Cardiac septum (tissue), 1 donor: ENCODE measurements at regions of chr15 and their contacts with region 1.

Region 1: DNA sequence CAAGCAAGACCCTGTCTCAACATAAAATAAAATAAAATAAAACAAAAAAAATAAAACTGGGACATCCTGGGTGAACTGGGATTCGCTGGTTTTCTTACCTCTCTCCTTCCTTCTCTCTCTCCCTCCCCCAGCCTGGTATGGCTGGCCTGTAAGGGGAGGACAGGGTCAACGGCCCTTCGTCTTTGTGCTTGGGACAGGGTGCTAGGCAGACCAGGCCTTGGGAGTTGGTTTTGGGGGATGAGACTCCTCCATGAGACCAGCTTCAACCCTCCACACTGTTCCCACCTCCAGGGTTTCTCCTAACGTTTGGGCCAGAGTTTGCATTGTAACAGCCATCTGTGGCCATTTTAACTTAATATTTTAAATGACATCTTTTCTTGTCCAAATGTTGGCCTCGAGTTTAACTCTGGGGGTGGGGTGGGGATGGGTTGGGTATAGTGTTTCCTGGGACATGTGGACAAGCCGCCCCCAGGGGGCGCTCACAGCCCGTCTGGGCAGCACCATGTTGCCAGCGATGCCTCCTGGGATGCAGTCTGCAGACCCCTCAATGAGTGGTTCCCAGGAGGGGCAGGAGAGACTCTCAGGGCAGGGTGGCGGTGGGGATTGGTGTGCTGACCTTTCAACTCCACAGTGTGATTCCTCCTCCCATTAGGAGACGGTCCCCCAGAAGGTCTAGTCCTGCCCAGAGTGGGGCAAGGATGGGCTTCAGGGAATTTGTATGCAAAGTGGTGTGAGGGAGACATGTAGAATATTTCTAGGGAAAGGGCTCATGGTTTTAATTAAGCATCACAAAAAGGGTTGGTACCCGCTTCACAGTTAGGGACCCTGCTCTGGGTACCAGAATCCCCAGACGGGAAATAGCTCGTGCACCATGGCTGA is 37.7 kb upstream of the LCTL start:
- DNase-seq: peak; percentile 87

Region 2: GRCh38 chr15:66459818-66460615 is 143.5 kb before region 1 on chr15:
- intact Hi-C with region 1: no loop called
- DNase-seq: no peak

Region 3: DNA sequence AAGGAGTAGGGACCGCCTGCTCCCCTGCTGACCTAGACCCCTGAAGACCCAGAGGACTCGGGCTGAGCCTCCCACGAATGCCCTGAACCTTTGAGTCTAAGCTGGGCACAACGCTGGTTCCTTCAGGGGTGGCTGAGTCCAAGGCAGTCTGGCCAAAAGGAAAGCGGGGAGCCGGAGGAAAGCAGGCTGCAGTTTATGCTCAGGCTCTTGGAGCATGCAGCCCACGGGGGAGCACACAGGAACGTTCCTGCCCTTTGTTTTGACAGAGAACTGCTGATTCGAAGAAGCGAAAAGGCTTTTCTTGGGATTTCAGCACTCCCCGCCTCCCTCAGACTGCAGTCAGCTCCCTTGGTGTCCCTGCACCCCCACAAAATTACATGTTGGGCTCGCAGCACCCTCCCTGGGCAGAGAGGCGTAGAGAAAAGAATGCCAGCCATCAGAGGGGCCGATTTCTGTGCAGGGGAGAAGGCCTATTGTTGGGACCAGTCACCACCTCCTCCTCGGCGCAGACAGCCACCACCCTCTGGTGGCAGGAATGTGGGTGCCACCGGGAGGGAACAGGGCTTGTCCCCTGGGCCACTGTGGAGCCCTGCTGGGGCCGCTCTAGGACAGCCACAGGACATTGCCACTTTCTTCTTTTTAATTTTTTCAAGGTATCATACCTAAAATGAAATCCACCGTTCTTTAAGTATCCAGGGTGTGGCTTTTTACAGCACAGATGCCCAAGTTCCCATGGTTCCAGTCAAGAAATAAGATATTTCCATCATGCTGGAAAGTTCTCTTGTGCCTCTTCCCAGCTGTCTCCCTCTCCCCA is 170.7 kb after region 1 on chr15:
- intact Hi-C with region 1: loop called (anchors 5 kb)
- DNase-seq: peak; percentile 92

Region 4: GRCh38 chr15:66912001-66912400 is 308.5 kb after region 1 on chr15:
- intact Hi-C with region 1: no loop called
- DNase-seq: peak; percentile 58